SK-N-SH (cell line): ENCODE measurements at regions of chr21 and their contacts with region 1.

Region 1: GRCh38 chr21:34202553-34203372 is 129.4 kb downstream of the MRPS6 start:
- DNase-seq: peak; percentile 55
- H3K4me3 ChIP-seq: no peak overlapping the region
- H3K27ac ChIP-seq: peak overlapping the region in 1 of 2 experiments; percentile 84; a peak in 1 of 4 replicates
- H3K4me1 ChIP-seq: peaks cover 7 to 43% of the 10 kb centered on the region in 2 experiments; a peak in 2 of 4 replicates
- H3K27me3 ChIP-seq: no peaks in the 10 kb centered on the region
- CTCF ChIP-seq: no peak
- EP300 ChIP-seq: no peak
- RAD21 ChIP-seq: no peak

Region 2: DNA sequence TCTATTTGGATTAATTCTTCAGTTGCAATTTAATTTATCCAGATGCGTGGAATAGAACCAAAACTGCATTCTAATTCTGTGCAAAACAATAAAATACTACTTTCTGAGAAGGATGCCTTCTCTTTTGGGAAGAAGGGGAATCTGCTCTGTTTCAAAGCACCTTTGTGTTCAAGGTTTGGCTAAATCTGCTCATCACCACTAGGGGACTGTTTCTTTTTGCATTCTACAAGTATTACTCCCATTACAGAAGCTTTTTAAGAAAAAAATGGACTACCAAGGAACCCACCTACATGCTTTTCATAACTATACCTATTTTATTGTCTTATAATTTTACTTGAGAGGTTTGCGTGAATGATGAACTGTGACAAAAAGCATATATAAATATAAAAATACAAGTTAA is 111.2 kb before region 1 on chr21:
- CTCF ChIA-PET with region 1: interaction called, 10 read pairs
- POLR2A ChIA-PET with region 1: no interaction called
- DNase-seq: no peak
- H3K4me3 ChIP-seq: no peak overlapping the region
- H3K27ac ChIP-seq: no peak overlapping the region
- H3K4me1 ChIP-seq: peaks cover 0 to 6% of the 10 kb centered on the region in 2 experiments; a peak in 3 of 4 replicates
- H3K27me3 ChIP-seq: no peaks in the 10 kb centered on the region
- CTCF ChIP-seq: peak; percentile 58
- EP300 ChIP-seq: no peak
- RAD21 ChIP-seq: peak; percentile 28; the same call in 1 of the 2 replicates

Region 3: DNA sequence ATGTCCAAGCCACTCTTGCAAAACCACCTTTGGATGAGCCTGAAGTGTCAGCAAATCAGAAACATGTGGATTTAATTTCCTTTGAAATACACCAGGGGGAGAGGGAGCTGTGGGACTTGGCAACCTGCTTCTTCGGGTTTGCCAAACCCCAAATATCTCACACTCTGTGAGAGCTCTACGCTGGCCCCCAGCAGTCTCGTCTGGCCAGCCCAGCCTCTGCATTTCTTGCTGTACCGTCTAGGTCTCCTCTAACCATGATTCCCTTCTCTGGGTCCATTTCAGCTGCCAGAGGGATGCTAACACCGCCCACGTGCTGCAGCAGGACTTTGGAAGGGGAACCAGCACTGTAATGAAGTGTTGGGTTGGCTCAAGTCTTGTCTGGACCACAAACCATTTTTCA is 14.8 kb before region 1 on chr21:
- CTCF ChIA-PET with region 1: no interaction called
- POLR2A ChIA-PET with region 1: no interaction called
- DNase-seq: no peak
- H3K4me3 ChIP-seq: no peak overlapping the region
- H3K27ac ChIP-seq: no peak overlapping the region
- H3K4me1 ChIP-seq: peaks cover 0 to 13% of the 10 kb centered on the region in 2 experiments; a peak in 1 of 4 replicates
- H3K27me3 ChIP-seq: no peaks in the 10 kb centered on the region
- CTCF ChIP-seq: no peak
- EP300 ChIP-seq: no peak
- RAD21 ChIP-seq: no peak

Region 4: DNA sequence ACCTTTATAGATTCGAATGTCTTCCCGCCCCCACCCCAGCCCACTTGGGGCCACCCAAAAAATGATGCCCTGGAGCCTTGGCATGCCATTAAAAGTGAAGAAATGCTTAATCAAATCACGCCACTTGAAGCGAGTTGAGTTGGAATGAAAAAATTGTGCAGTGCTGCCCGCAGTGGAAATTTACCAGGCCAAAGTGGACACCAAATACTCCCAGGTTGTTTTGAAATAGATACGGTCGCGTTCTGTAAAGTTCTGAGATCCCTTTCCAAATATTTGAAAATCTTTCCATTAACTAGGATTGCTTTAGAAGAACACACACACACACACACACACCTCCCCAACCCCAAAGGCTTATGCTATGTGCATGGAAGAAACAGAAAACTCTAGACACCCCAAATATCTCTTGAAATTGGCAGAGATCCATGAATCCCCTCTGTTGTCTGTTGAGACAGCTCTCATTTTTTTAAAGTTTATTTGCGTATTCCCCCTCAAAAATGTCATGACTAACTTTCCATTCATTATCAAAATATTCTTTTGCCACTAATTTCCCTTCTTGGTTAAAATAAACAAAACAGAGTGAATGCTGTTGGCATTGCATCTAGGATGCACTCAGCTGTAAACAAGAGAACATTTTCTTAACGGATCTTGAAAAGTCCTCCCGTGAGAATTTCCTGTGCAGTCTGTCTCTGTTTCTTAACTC is 18.7 kb after region 1 on chr21:
- CTCF ChIA-PET with region 1: no interaction called
- POLR2A ChIA-PET with region 1: no interaction called
- DNase-seq: no peak
- H3K4me3 ChIP-seq: no peak overlapping the region
- H3K27ac ChIP-seq: no peak overlapping the region
- H3K4me1 ChIP-seq: peaks cover 0 to 3% of the 10 kb centered on the region in 2 experiments; a peak in 1 of 4 replicates
- H3K27me3 ChIP-seq: no peaks in the 10 kb centered on the region
- CTCF ChIP-seq: no peak
- EP300 ChIP-seq: no peak
- RAD21 ChIP-seq: no peak